ENCODE measurements at regions of chr12 and their contacts with region 1.

Region 1: DNA sequence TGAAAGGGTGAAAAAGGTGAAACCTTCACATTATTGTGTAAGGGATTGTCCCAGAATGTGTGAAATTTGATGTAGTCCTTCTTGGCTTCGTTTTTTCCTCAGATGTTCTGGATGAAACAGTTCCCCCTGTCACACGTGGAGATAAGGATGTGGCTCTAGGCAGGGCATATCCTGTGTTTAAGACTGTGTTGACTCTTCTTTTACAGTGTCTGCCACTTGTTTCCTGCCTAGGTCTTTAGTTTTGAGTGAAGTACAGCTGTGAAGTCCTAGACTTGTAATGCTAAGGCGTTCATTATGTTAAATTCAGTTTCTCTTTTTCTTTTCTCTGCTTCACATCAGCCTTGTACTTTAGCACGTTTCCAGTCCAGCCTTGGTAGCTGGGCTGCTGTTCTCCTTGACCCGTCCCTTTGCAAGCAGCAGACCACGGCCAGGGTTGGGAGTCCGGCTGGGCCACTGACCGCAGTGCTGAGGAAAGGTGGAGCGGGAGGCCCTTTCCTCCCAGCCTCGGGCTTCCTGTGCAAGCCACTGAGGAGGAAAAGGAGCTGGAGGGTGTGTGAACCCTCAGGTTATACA is 59.1 kb downstream of the RASSF3 start:
- DNase-seq: peak; percentile 60
- H3K4me3 Mint-ChIP-seq: peak overlapping the region; percentile 82
- H3K27ac Mint-ChIP-seq: peak overlapping the region; percentile 98
- H3K4me1 Mint-ChIP-seq: peaks cover 92% of the 10 kb centered on the region
- H3K27me3 Mint-ChIP-seq: no peaks in the 10 kb centered on the region

Region 2: DNA sequence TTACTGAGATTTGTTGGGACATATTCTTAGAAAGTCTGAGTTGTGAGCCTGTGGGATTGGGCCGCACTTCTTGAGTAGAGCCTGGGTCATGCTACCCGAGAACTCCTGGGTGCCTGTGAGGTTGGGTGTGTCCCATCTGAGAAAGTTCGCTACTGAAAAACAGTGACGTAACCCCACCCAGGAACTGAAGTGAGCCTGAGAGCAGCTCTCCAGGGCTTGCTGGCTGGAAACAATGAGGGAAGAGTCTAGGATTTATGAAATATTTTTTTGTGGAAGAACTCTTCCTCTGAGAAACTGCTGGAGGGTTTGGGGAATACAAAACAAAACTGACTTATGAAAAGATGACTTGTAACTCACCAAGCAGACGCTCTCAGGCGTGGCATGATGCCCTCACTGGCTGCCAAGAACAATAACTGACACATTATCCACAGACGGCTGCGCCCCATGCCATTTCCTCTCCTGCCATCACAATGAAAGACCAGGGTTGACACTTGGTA is 10.2 kb after region 1 on chr12:
- CTCF ChIA-PET with region 1: interaction called, 92 read pairs
- POLR2A ChIA-PET with region 1: interaction called, 301 read pairs
- DNase-seq: peak; percentile 73
- H3K4me3 Mint-ChIP-seq: peak overlapping the region; percentile 62
- H3K27ac Mint-ChIP-seq: peak overlapping the region; percentile 95
- H3K4me1 Mint-ChIP-seq: peaks cover 95% of the 10 kb centered on the region
- H3K27me3 Mint-ChIP-seq: no peaks in the 10 kb centered on the region

Region 3: DNA sequence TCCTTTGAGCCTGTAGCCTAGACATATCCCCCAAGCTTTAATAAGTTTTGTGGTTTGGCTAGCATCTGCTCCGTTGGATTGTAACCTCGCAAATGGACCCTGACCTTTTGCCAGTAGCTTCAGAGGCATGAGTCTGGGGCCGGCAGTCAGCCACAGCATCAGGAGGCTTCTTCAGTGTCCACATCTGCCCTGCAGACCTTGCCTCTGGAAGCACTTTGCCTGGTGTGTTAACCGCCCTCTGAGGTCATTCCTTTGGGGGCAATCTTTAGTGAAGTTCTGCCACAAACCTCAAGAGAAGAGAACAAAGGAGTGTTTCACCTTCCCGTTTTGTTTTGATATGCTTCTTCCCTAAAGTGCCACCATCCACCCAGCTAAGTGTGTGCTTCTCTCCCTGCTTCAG is 18.5 kb after region 1 on chr12:
- CTCF ChIA-PET with region 1: interaction called, 92 read pairs
- POLR2A ChIA-PET with region 1: interaction called, 301 read pairs
- DNase-seq: no peak
- H3K4me3 Mint-ChIP-seq: no peak overlapping the region
- H3K27ac Mint-ChIP-seq: peak overlapping the region; percentile 50
- H3K4me1 Mint-ChIP-seq: peaks cover 74% of the 10 kb centered on the region
- H3K27me3 Mint-ChIP-seq: no peaks in the 10 kb centered on the region

Region 4: DNA sequence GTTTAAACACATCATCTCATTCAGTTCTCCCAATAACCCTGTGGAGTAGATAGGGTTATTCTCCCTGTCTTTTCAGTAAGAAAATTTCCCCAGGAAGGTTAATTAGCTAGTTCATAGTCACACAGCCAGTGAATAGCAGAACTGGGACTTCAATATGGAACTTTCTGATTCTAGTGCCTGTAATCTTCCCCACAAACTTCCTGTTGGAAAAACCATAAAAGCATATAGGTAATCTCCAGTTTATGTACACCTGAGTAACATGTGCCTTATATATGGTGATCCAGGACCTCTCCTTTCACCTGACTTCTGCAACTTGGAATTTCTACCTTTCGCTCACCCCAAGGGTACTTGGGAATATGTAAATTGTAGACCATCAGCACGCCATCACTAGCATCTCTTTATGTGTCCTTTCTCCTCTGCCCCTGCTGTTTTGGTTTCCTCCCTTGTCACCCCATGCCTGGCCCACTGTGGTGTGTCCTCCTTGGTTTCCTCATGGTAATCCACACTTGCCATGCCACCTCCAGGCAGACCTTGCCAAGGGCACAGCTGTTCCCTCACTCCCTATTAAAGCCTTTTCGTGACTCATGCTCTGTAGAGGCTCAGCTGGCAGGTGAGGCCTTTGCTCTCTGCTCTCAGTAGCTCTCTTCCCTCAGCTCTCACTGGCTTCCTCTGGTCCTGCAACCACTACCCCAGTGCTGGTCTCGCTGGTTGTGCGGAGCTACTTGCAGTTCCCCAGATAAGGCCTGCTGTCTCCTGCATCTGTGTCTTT is 171.8 kb after region 1 on chr12:
- CTCF ChIA-PET with region 1: no interaction called
- POLR2A ChIA-PET with region 1: no interaction called
- DNase-seq: no peak
- H3K4me3 Mint-ChIP-seq: no peak overlapping the region
- H3K27ac Mint-ChIP-seq: no peak overlapping the region
- H3K4me1 Mint-ChIP-seq: no peaks in the 10 kb centered on the region
- H3K27me3 Mint-ChIP-seq: peaks cover 3% of the 10 kb centered on the region

Measured in activated CD4-positive, alpha-beta memory T cell treated with anti-CD3 and anti-CD28 coated beads, Interleukin-2, amount 10 ng/mL, durations not matched to agents 7 days and 5 days (primary cell).